ENCODE measurements at regions of chr1 and their contacts with region 1.

Region 1: GRCh38 chr1:99481391-99481996 is 164.4 kb upstream of the PALMD start:
- DNase-seq: peak; percentile 30
- ATAC-seq: peak in 1 of 2 donors; percentile 47

Region 2: GRCh38 chr1:99180343-99180808 is 301.1 kb before region 1 on chr1:
- intact Hi-C with region 1: loop called (anchors 5 to 10 kb)
- DNase-seq: peak; percentile 75
- ATAC-seq: peak; percentile 94 to 96

Region 3: DNA sequence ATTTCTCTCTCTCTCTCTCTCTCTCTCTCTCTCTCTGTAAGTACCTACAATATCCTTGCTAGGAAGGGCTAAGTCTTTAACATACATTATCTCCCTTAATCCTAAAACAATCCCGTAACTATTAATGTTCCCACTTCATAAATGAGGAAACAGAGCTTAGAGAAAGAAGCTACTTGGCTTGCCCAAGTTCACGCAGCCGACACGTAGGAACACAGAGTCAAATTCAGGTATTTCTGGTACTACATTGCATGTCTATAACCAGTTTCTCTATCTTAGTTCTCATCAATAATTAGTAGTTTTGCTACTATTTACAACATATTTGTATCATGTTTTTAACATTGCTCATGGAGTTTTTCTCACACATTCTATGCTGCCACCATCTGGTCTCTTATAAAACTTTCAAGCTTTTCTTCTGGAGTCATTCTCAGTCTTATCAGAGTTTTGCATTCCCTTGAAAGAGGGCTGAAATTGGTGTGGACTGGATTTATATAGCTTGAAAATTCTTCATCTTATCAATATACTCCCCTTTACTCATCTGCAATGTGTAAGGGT is 45.5 kb after region 1 on chr1:
- intact Hi-C with region 1: loop called in 1 of 2 experiments (anchors 5 kb)
- DNase-seq: no peak
- ATAC-seq: no peak